K562 (cell line): ENCODE measurements at regions of chr6 and their contacts with region 1.

Region 1: GRCh38 chr6:146857180-146857979 is 258.6 kb downstream of the ADGB start:
- DNase-seq: peak; percentile 85 to 96 (median 86)
- ATAC-seq: peak; percentile 86
- H3K4me3 ChIP-seq: peak overlapping the region; percentile 54
- H3K27ac ChIP-seq: peak overlapping the region; percentile 71
- H3K4me1 ChIP-seq: peaks cover 9 to 28% of the 10 kb centered on the region in 2 experiments
- H3K27me3 ChIP-seq: no peaks in the 10 kb centered on the region
- CTCF ChIP-seq: peak; percentile 96 to 99 (median 98)
- EP300 ChIP-seq: peak; percentile 79
- POLR2A ChIP-seq: peak; percentile 68
- RAD21 ChIP-seq: peak; percentile 99

Region 2: DNA sequence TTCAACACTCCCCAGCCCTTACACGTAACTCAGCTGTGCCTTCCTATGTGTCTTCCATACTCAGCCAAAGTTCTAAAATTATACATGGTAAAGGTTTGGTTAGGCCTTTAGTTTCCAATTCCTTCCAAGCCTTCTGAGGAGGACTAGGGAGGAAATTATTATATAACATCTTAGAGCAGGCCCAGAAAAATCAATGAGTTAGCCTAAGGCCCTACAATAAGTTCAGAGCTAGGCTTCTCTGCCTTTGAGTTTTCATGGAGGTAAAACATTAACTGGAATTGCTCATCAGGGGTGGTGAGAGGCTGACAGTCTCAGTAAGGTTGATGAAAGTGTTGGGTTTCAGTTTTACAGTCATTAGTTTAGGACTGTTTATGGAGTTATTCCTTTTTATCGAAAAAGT is 27.3 kb after region 1 on chr6:
- CTCF ChIA-PET with region 1: interaction called, 4 read pairs
- POLR2A ChIA-PET with region 1: interaction called, 4 read pairs
- in situ Hi-C with region 1: no loop called
- intact Hi-C with region 1: loop called (anchors 2 kb)
- DNase-seq: peak in 1 of 4 experiments; percentile 75
- ATAC-seq: peak; percentile 27
- H3K4me3 ChIP-seq: peak overlapping the region; percentile 31
- H3K27ac ChIP-seq: peak overlapping the region; percentile 89
- H3K4me1 ChIP-seq: peaks cover 45 to 83% of the 10 kb centered on the region in 2 experiments
- H3K27me3 ChIP-seq: no peaks in the 10 kb centered on the region
- CTCF ChIP-seq: no peak; a peak in 1 of 6 replicates
- EP300 ChIP-seq: no peak
- POLR2A ChIP-seq: no peak
- RAD21 ChIP-seq: no peak

Region 3: GRCh38 chr6:146968041-146968760 is 110.8 kb after region 1 on chr6:
- CTCF ChIA-PET with region 1: no interaction called
- POLR2A ChIA-PET with region 1: no interaction called
- in situ Hi-C with region 1: no loop called
- intact Hi-C with region 1: no loop called
- DNase-seq: no peak
- ATAC-seq: no peak
- H3K4me3 ChIP-seq: no peak overlapping the region
- H3K27ac ChIP-seq: no peak overlapping the region
- H3K4me1 ChIP-seq: no peaks in the 10 kb centered on the region
- H3K27me3 ChIP-seq: no peaks in the 10 kb centered on the region
- CTCF ChIP-seq: no peak
- EP300 ChIP-seq: no peak
- POLR2A ChIP-seq: no peak
- RAD21 ChIP-seq: no peak

Region 4: DNA sequence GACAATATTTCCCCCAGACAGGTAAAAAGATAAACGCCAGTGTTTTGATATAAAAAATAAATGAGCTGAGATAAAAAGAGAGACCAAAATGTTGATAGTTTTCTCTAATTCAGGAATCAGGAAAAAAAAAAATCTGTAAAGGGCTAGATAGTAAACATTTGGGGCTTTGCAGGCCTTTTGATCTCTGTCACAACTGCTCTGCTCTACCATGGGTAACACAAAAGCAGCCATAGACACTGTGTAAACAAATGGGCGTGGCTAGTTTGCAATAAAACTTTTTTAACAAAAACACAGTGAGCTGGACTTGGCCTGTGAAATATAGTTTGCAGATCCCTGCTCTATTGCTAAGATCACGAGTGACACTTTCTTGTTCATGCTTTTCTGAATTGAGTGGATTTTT is 127.7 kb after region 1 on chr6:
- CTCF ChIA-PET with region 1: no interaction called
- POLR2A ChIA-PET with region 1: no interaction called
- in situ Hi-C with region 1: no loop called
- intact Hi-C with region 1: loop called (anchors 5 kb)
- DNase-seq: peak; percentile 28 to 46 (median 36)
- ATAC-seq: peak; percentile 93
- H3K4me3 ChIP-seq: no peak overlapping the region
- H3K27ac ChIP-seq: no peak overlapping the region
- H3K4me1 ChIP-seq: peaks cover 0 to 5% of the 10 kb centered on the region in 2 experiments; a peak in 2 of 5 replicates
- H3K27me3 ChIP-seq: no peaks in the 10 kb centered on the region
- CTCF ChIP-seq: no peak
- EP300 ChIP-seq: no peak
- POLR2A ChIP-seq: no peak
- RAD21 ChIP-seq: no peak

Region 5: DNA sequence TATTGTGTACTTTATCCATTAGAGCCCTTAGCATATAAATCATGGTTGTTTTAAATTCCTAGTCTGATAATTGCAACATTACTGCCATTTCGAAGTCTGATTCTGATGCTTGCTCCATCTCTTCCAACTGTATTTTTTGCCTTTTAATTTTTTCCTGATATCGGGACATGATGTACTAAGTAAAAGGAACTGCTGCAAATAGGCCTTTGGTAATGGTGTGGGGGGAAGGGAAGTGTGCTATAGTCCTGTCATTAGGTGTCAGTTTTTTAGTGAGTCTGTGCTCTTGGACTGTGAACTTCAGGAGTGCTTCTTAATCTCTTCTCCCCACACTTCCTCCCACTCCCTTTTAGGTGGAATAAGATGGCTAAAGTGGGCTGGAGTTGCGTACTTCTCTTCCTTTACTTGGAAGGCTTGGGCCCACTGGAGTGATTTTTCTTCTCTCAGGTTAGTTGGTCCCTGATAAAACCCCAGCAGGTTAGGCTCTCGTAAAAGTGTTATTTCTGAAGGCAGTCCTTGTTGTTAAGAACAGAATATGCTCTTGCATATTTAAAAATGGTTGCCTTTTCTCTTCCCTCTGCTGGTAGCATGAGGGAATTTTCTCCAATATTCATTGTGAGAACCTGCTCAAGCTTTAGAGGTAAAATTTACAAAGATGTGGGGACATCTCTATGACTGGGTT is 364.9 kb after region 1 on chr6:
- CTCF ChIA-PET with region 1: interaction called, 6 read pairs
- POLR2A ChIA-PET with region 1: interaction called, 3 read pairs
- in situ Hi-C with region 1: no loop called
- intact Hi-C with region 1: loop called (anchors 5 kb)
- DNase-seq: peak; percentile 26 to 92 (median 56)
- ATAC-seq: peak; percentile 84
- H3K4me3 ChIP-seq: no peak overlapping the region; the same call in 1 of the 2 replicates
- H3K27ac ChIP-seq: peak overlapping the region; percentile 64
- H3K4me1 ChIP-seq: peaks cover 4 to 59% of the 10 kb centered on the region in 2 experiments; a peak in 3 of 5 replicates
- H3K27me3 ChIP-seq: no peaks in the 10 kb centered on the region
- CTCF ChIP-seq: peak; percentile 24 to 69 (median 61); a peak in 5 of 6 replicates
- EP300 ChIP-seq: peak; percentile 91
- POLR2A ChIP-seq: no peak; the same call in 1 of the 2 replicates
- RAD21 ChIP-seq: peak; percentile 47 to 48

Region 6: GRCh38 chr6:147503587-147503986 is 646.2 kb after region 1 on chr6:
- CTCF ChIA-PET with region 1: no interaction called
- POLR2A ChIA-PET with region 1: no interaction called
- in situ Hi-C with region 1: no loop called
- intact Hi-C with region 1: no loop called
- DNase-seq: no peak
- ATAC-seq: no peak
- H3K4me3 ChIP-seq: no peak overlapping the region
- H3K27ac ChIP-seq: no peak overlapping the region
- H3K4me1 ChIP-seq: peaks cover 12 to 21% of the 10 kb centered on the region in 2 experiments; a peak in 4 of 5 replicates
- H3K27me3 ChIP-seq: peaks cover under 1 to 17% of the 10 kb centered on the region in 2 experiments; a peak in 2 of 5 replicates
- CTCF ChIP-seq: no peak
- EP300 ChIP-seq: no peak
- POLR2A ChIP-seq: no peak
- RAD21 ChIP-seq: no peak